AG04449 (cell line): ENCODE measurements at regions of chr5 and their contacts with region 1.

Region 1: DNA sequence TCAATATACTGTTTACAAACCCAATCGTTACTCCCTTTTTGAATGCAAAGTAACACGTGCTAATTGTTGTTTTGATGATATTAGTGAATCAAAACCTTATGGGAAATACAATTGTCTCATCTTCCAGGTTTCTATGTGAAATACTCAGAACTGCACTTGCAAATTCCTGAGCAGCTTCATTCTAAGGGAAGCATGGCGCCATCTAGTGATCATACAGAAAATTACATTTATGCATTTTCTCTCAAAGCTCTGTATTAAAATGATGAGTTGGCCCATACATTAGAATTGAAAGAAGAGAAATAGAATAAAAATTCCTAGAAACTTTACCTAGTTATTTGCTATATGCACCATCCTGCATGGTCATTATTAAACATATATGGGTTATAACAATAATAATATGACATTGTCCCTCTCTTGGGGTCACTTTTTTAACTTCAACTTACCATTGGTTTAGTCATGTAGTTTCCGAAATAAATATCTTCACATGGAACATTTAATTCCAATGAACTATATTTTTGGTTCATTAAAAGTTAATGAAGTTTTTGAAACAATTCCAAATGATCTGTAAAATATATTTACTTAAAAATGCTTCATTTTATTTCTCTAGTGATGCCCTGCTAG is 220.0 kb downstream of the PDE4D start:
- DNase-seq: no peak
- H3K4me3 ChIP-seq: no peak overlapping the region
- CTCF ChIP-seq: peak; percentile 50

Region 2: DNA sequence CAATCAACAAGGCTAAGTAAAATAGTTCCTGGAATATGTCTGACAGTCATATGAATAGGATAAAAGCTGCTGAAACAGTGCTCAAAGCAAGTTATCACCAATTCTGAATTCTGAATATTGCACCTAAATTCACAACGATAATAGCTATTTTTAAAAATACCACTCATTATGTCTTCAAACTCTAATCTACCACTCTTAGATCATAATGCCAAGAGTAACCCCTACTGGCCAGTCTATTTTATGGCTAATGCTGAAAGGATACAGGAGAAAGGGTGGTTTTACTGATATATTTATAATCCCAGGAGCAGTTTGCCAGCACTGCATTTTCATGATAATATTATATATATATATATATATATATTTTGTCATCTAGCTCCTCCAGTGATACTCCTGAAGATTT is 12.8 kb before region 1 on chr5:
- CTCF ChIA-PET with region 1: interaction called, 37 read pairs
- POLR2A ChIA-PET with region 1: no interaction called
- DNase-seq: no peak
- H3K4me3 ChIP-seq: no peak overlapping the region
- CTCF ChIP-seq: peak; percentile 34

Region 3: DNA sequence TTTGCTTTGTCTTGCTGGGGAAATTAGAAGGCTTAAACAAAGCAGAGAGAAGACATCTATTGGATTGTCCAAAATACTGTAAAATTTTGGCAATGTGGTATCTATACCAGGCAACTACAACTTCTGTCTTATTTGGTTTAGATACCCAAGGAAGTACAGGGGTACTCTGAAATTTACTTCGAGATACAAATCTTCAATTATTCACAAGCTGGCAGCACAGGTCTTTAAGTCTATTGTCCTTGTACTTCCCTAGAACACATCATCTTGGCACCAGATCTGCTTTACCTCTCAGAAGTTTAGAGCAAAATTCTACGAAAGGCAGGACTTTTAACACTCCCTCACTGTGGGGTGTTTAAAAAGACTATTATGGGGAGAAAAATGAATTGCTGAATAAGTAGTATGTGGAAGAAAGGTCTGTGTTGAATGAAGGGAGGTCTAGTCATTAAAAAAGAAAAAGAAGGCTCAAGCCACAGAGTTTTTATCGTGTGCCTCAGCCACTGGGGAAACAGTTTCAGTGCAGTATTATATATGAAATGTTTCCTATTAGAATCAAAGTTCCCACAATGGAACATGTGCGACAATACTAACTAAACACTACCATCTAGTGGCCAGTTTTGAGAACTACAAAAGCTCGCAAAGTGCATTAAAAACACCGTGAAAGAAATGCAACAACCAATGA is 126.3 kb after region 1 on chr5:
- CTCF ChIA-PET with region 1: interaction called, 25 read pairs
- POLR2A ChIA-PET with region 1: no interaction called
- DNase-seq: no peak
- H3K4me3 ChIP-seq: no peak overlapping the region
- CTCF ChIP-seq: peak; percentile 30